IMR-90 (cell line): ENCODE measurements at regions of chr7 and their contacts with region 1.

Region 1: GRCh38 chr7:47651355-47652317 is 69.7 kb upstream of the TNS3 start:
- DNase-seq: peak; percentile 99
- ATAC-seq: peak; percentile 87
- H3K4me3 ChIP-seq: no peak overlapping the region
- H3K27ac ChIP-seq: peak overlapping the region; percentile 75
- H3K4me1 ChIP-seq: peaks cover 37% of the 10 kb centered on the region
- H3K27me3 ChIP-seq: no peaks in the 10 kb centered on the region; the same call in 1 of the 2 replicates
- CTCF ChIP-seq: no peak
- POLR2A ChIP-seq: 0 out of 2 replicates have a peak, but pooled peaks have one; percentile 22
- RAD21 ChIP-seq: peak; percentile 56

Region 2: GRCh38 chr7:46705406-46706255 is 946.0 kb before region 1 on chr7:
- CTCF ChIA-PET with region 1: no interaction called
- POLR2A ChIA-PET with region 1: no interaction called
- dilution Hi-C with region 1: no loop called
- in situ Hi-C with region 1: no loop called
- intact Hi-C with region 1: no loop called
- DNase-seq: peak; percentile 57
- ATAC-seq: peak; percentile 74
- H3K4me3 ChIP-seq: no peak overlapping the region
- H3K27ac ChIP-seq: no peak overlapping the region; the same call in 1 of the 2 replicates
- H3K4me1 ChIP-seq: peaks cover 6% of the 10 kb centered on the region
- H3K27me3 ChIP-seq: no peaks in the 10 kb centered on the region
- CTCF ChIP-seq: no peak
- POLR2A ChIP-seq: no peak
- RAD21 ChIP-seq: no peak

Region 3: GRCh38 chr7:47610506-47611044 is 41.1 kb before region 1 on chr7:
- CTCF ChIA-PET with region 1: no interaction called
- POLR2A ChIA-PET with region 1: no interaction called
- dilution Hi-C with region 1: no loop called
- in situ Hi-C with region 1: no loop called
- intact Hi-C with region 1: loop called (anchors 5 kb)
- DNase-seq: peak; percentile 94
- ATAC-seq: peak; percentile 85
- H3K4me3 ChIP-seq: no peak overlapping the region
- H3K27ac ChIP-seq: peak overlapping the region; percentile 86
- H3K4me1 ChIP-seq: peaks cover 19% of the 10 kb centered on the region
- H3K27me3 ChIP-seq: no peaks in the 10 kb centered on the region; the same call in 1 of the 2 replicates
- CTCF ChIP-seq: no peak
- POLR2A ChIP-seq: peak; percentile 25; the same call in 1 of the 2 replicates
- RAD21 ChIP-seq: peak; percentile 8; the same call in 1 of the 2 replicates

Region 4: DNA sequence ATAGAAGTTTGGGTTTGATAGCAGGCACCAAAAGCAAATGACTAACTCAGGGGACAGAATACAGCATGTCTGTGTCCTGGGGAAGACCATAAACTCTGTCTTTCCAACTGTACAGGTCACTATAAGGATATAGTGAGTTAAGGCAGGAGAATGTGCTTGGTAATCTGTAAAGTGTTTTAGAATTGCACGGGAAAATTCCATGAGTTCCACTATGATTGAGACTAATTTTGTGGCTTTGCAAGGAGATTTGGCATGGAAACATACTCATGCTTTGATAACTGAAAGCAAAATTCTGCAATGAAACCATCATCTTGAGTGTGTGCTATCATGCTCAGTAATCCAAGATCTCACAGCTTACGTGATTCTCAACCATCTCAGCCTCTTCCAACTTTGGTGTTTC is 144.0 kb after region 1 on chr7:
- CTCF ChIA-PET with region 1: no interaction called
- POLR2A ChIA-PET with region 1: no interaction called
- dilution Hi-C with region 1: no loop called
- in situ Hi-C with region 1: no loop called
- intact Hi-C with region 1: loop called (anchors 5 kb)
- DNase-seq: peak; percentile 96
- ATAC-seq: peak; percentile 92
- H3K4me3 ChIP-seq: peak overlapping the region; percentile 32; the same call in 1 of the 2 replicates
- H3K27ac ChIP-seq: peak overlapping the region; percentile 80
- H3K4me1 ChIP-seq: peaks cover 13% of the 10 kb centered on the region
- H3K27me3 ChIP-seq: no peaks in the 10 kb centered on the region
- CTCF ChIP-seq: no peak
- POLR2A ChIP-seq: peak; percentile 74
- RAD21 ChIP-seq: no peak; the same call in 1 of the 2 replicates